Activated CD4-positive, alpha-beta memory T cell treated with anti-CD3 and anti-CD28 coated beads for 36 hours (primary cell): ENCODE measurements at regions of chr13 and their contacts with region 1.

Region 1: GRCh38 chr13:50911937-50912795 is 2.6 kb downstream of the RNASEH2B start:
- DNase-seq: peak; percentile 95
- H3K4me3 Mint-ChIP-seq: peak overlapping the region; percentile 94
- H3K27ac Mint-ChIP-seq: peak overlapping the region; percentile 98
- H3K4me1 Mint-ChIP-seq: peaks cover 51% of the 10 kb centered on the region
- H3K27me3 Mint-ChIP-seq: no peaks in the 10 kb centered on the region

Region 2: DNA sequence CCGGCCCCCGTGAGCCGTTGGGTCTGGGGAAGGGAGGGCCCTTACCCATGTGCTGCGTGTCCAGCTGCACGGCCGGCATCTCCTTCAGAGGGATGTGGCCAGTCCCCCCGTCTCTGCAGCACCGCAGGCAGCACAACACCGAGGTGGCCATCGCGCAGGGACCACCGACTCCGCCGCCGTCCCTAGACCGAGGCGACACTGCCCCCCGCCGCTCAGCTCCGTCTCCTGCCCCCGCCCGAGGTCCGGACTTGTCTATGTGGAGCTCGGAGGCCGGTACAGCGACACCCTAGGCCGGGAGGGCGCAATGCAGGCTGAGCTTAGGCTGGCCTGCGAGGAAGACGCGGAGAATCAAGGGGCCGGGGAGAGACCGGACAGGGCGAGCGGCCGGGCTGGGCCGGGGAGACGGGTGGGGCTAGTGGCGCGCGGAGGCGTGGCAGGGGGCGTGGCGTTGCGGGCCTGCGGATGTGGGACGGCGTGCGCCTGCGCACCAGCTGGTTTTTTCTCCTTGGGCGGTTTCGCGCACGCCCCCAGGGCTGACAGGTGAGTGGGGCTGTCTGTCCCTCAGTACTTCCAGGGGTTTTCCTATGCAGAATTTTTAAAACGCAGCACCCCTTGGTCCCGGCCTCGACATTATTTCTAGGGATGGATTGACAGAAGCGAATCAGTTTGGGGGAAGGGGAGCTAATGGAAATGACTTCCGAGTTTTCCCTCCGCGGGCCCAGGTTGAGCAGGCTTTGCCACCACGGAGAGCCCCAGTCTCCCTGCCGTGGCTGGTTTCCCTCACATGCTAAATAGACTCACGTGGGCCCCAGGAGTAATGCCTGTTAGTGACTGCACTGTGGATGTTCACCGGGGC is 975.9 kb before region 1 on chr13 and contains the start of gene SPRYD7:
- CTCF ChIA-PET with region 1: interaction called, 12 read pairs
- POLR2A ChIA-PET with region 1: no interaction called
- intact Hi-C with region 1: loop called (anchors 1 kb)
- DNase-seq: peak; percentile 97
- H3K4me3 Mint-ChIP-seq: peak within 1 kb of the TSS; percentile 92
- H3K27ac Mint-ChIP-seq: peak within 1 kb of the TSS; percentile 77
- H3K4me1 Mint-ChIP-seq: peaks cover 12% of the 10 kb centered on the region
- H3K27me3 Mint-ChIP-seq: no peaks in the 10 kb centered on the region
- total RNA-seq, gene SPRYD7: 4.9 to 5.4 TPM

Region 3: GRCh38 chr13:50123862-50124536 is 788.2 kb before region 1 on chr13:
- CTCF ChIA-PET with region 1: no interaction called
- POLR2A ChIA-PET with region 1: no interaction called
- intact Hi-C with region 1: loop called (anchors 1 kb)
- DNase-seq: peak; percentile 88
- H3K4me3 Mint-ChIP-seq: peak overlapping the region; percentile 81
- H3K27ac Mint-ChIP-seq: peak overlapping the region; percentile 90
- H3K4me1 Mint-ChIP-seq: peaks cover 58% of the 10 kb centered on the region
- H3K27me3 Mint-ChIP-seq: peaks cover 16% of the 10 kb centered on the region

Region 4: GRCh38 chr13:50365408-50366391 is 546.5 kb before region 1 on chr13:
- CTCF ChIA-PET with region 1: no interaction called
- POLR2A ChIA-PET with region 1: no interaction called
- intact Hi-C with region 1: loop called (anchors 2 kb)
- DNase-seq: peak; percentile 76
- H3K4me3 Mint-ChIP-seq: peak overlapping the region; percentile 54
- H3K27ac Mint-ChIP-seq: peak overlapping the region; percentile 59
- H3K4me1 Mint-ChIP-seq: peaks cover 53% of the 10 kb centered on the region
- H3K27me3 Mint-ChIP-seq: peaks cover 15% of the 10 kb centered on the region

Region 5: DNA sequence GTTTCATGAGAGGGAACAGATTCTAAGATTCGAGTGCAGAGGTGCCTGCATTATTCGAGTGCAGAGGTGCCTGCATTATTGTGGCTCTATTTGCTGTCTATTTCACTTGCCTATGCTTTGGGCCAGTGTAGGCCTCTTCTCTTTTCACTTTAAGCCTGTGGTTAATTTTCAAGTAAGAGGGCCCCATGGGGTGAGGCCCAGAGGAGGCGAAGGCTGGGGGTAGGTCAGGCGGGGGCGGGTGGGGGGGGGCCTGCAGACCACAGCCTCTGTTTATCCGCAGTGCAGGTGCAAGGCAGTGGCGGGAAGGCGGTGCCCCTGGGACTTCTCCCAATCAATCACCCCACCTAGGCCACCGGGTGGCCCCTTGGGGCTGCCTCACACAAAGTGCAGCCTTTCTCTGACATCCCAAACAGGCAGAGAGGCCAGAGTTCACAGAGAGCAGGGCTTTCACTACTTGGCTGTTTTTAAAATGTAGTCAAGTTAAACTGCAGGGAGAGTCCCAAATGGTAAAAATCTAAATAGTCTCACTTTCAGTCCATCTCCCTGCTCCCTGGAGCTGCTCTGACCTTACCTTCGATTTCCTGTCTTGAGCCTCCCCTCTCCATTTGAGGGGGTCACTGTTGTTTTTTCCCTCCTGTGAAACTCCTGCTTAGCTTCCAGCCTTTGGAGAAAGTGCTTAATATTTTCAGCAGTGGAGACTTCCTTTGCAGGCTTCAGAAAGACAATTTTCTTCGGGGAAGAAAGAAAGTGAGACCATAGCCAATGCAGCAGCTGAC is 317.7 kb before region 1 on chr13:
- CTCF ChIA-PET with region 1: no interaction called
- POLR2A ChIA-PET with region 1: no interaction called
- intact Hi-C with region 1: loop called (anchors 10 kb)
- DNase-seq: peak; percentile 57
- H3K4me3 Mint-ChIP-seq: no peak overlapping the region
- H3K27ac Mint-ChIP-seq: no peak overlapping the region
- H3K4me1 Mint-ChIP-seq: peaks cover 22% of the 10 kb centered on the region
- H3K27me3 Mint-ChIP-seq: no peaks in the 10 kb centered on the region

Region 6: GRCh38 chr13:50893211-50893852 is 18.8 kb before region 1 on chr13:
- CTCF ChIA-PET with region 1: interaction called, 38 read pairs
- POLR2A ChIA-PET with region 1: interaction called, 6 read pairs
- intact Hi-C with region 1: loop called (anchors 1 kb)
- DNase-seq: peak; percentile 16
- H3K4me3 Mint-ChIP-seq: peak overlapping the region; percentile 53
- H3K27ac Mint-ChIP-seq: peak overlapping the region; percentile 84
- H3K4me1 Mint-ChIP-seq: peaks cover 39% of the 10 kb centered on the region
- H3K27me3 Mint-ChIP-seq: no peaks in the 10 kb centered on the region

Region 7: DNA sequence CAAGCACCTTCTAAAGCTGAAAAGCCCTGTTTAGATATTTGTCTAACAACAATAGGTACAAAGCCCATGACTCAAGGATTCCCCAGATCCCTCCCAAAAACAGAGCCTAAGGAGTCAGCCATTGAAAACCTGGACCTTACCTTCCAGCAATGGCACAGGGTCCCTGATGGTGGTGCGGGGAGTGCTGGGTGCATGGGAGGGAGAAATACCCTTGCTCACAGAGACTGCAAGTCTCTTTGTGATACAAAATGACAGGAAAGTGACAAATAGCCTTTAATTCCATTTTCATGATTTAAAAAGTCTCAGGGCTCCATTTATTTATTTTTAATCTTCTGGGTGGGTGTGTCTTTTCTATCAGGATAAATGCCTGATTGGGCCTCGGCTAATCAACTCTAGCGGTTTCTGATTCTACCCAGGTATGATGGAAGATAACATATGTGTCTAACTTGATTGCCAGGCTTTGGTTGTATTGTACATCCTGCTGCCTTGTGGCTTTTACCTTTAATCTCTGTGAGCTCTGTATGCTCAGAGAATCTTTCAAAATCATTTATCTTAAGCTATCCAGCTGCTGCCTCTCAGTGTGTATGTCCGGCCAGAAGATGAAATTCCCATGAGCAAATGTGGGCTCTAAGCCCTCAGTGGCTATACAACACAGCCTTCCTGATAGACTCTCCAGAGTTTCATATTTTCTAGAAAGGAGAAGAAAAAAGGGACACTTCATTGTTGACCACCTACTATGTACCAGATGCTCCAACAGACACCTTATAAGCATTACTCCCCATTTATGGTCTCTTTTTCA is 255.4 kb after region 1 on chr13:
- CTCF ChIA-PET with region 1: no interaction called
- POLR2A ChIA-PET with region 1: no interaction called
- intact Hi-C with region 1: no loop called
- DNase-seq: no peak
- H3K4me3 Mint-ChIP-seq: no peak overlapping the region
- H3K27ac Mint-ChIP-seq: no peak overlapping the region
- H3K4me1 Mint-ChIP-seq: no peaks in the 10 kb centered on the region
- H3K27me3 Mint-ChIP-seq: peaks cover 17% of the 10 kb centered on the region

Region 8: GRCh38 chr13:52194184-52194868 is 1282.2 kb after region 1 on chr13:
- CTCF ChIA-PET with region 1: no interaction called
- POLR2A ChIA-PET with region 1: no interaction called
- intact Hi-C with region 1: loop called (anchors 5 kb)
- DNase-seq: peak; percentile 93
- H3K4me3 Mint-ChIP-seq: peak overlapping the region; percentile 97
- H3K27ac Mint-ChIP-seq: peak overlapping the region; percentile 91
- H3K4me1 Mint-ChIP-seq: peaks cover 22% of the 10 kb centered on the region
- H3K27me3 Mint-ChIP-seq: no peaks in the 10 kb centered on the region